K562 (cell line): ENCODE measurements at regions of chr7 and their contacts with region 1.

Region 1: GRCh38 chr7:106285051-106285854 is 470 bp upstream of the NAMPT start:
- DNase-seq: peak; percentile 98 to 100 (median 98)
- ATAC-seq: peak; percentile 87
- H3K4me3 ChIP-seq: peak overlapping the region; percentile 73
- H3K27ac ChIP-seq: peak overlapping the region; percentile 91
- H3K4me1 ChIP-seq: peaks cover 11 to 28% of the 10 kb centered on the region in 2 experiments
- H3K27me3 ChIP-seq: no peaks in the 10 kb centered on the region
- CTCF ChIP-seq: 0 out of 6 replicates have a peak, but pooled peaks of 1 of the 3 experiments have one; percentile 3
- EP300 ChIP-seq: peak; percentile 20; the same call in 1 of the 2 replicates
- POLR2A ChIP-seq: peak; percentile 94
- RAD21 ChIP-seq: peak in 1 of 2 experiments; percentile 18; a peak in 1 of 4 replicates

Region 2: GRCh38 chr7:106273009-106273668 is 12.1 kb before region 1 on chr7:
- CTCF ChIA-PET with region 1: no interaction called
- POLR2A ChIA-PET with region 1: interaction called, 73 read pairs
- in situ Hi-C with region 1: no loop called
- intact Hi-C with region 1: no loop called
- DNase-seq: no peak
- ATAC-seq: no peak
- H3K4me3 ChIP-seq: no peak overlapping the region
- H3K27ac ChIP-seq: no peak overlapping the region
- H3K4me1 ChIP-seq: no peaks in the 10 kb centered on the region
- H3K27me3 ChIP-seq: no peaks in the 10 kb centered on the region
- CTCF ChIP-seq: no peak
- EP300 ChIP-seq: no peak
- POLR2A ChIP-seq: no peak
- RAD21 ChIP-seq: no peak

Region 3: DNA sequence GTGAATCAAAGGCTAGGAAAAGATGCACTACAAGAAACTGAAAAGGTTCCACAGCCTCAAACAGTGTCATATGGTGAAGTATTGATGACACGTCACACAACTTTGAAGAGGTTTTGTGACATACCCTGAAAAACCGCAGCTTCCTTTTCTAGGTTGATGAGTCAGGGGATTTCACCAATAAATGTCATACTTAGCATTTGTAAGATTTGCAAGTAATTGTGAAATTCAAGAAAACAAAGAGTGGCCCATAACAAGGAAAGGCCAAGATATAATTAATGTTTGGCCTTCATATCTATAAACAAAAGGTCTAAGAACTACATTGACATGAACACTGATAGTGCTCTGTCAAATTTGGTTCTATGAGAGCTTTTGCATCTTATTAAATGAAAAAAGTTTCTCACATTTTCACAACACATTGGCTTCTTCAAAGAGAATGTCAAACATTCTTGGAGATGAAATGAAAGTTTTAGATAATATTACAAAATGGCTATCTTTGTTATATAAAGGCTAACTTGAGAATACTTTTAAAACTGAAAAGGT is 61.5 kb after region 1 on chr7:
- CTCF ChIA-PET with region 1: no interaction called
- POLR2A ChIA-PET with region 1: interaction called, 3 read pairs
- in situ Hi-C with region 1: no loop called
- intact Hi-C with region 1: loop called (anchors 5 kb)
- DNase-seq: peak in 2 of 4 experiments; percentile 60 to 85
- ATAC-seq: peak; percentile 89
- H3K4me3 ChIP-seq: no peak overlapping the region
- H3K27ac ChIP-seq: peak overlapping the region; percentile 64
- H3K4me1 ChIP-seq: peaks cover 0 to 26% of the 10 kb centered on the region in 2 experiments; a peak in 3 of 5 replicates
- H3K27me3 ChIP-seq: no peaks in the 10 kb centered on the region
- CTCF ChIP-seq: no peak
- EP300 ChIP-seq: peak; percentile 94
- POLR2A ChIP-seq: no peak
- RAD21 ChIP-seq: no peak; a peak in 1 of 4 replicates

Region 4: DNA sequence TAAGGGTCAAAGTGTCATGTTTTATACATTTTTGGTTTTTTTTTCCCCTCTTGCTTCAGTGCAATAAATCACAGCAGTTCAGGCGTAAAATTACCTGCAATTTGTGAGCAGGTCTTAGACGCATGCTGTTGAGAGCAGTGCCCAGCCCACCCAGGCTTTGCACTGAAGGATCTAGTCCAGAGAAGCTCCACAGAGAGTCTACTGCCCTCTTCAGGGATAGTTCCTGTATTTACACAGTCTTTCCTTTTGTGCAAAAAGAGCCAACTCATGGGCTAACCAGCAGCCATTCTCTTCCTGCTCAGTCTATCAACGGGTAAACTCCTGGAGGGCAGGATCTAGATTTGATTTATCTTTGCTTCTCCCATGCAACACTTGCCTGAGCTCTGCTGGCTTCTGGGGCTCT is 81.8 kb after region 1 on chr7:
- CTCF ChIA-PET with region 1: no interaction called
- POLR2A ChIA-PET with region 1: interaction called, 3 read pairs
- in situ Hi-C with region 1: no loop called
- intact Hi-C with region 1: loop called (anchors 1 kb)
- DNase-seq: peak in 3 of 4 experiments; percentile 33 to 77 (median 68)
- ATAC-seq: peak; percentile 96
- H3K4me3 ChIP-seq: no peak overlapping the region
- H3K27ac ChIP-seq: no peak overlapping the region
- H3K4me1 ChIP-seq: peaks cover 0 to 18% of the 10 kb centered on the region in 2 experiments; a peak in 4 of 5 replicates
- H3K27me3 ChIP-seq: no peaks in the 10 kb centered on the region
- CTCF ChIP-seq: peak; percentile 69 to 87 (median 74)
- EP300 ChIP-seq: no peak; the same call in 1 of the 2 replicates
- POLR2A ChIP-seq: no peak
- RAD21 ChIP-seq: peak; percentile 85 to 92

Region 5: DNA sequence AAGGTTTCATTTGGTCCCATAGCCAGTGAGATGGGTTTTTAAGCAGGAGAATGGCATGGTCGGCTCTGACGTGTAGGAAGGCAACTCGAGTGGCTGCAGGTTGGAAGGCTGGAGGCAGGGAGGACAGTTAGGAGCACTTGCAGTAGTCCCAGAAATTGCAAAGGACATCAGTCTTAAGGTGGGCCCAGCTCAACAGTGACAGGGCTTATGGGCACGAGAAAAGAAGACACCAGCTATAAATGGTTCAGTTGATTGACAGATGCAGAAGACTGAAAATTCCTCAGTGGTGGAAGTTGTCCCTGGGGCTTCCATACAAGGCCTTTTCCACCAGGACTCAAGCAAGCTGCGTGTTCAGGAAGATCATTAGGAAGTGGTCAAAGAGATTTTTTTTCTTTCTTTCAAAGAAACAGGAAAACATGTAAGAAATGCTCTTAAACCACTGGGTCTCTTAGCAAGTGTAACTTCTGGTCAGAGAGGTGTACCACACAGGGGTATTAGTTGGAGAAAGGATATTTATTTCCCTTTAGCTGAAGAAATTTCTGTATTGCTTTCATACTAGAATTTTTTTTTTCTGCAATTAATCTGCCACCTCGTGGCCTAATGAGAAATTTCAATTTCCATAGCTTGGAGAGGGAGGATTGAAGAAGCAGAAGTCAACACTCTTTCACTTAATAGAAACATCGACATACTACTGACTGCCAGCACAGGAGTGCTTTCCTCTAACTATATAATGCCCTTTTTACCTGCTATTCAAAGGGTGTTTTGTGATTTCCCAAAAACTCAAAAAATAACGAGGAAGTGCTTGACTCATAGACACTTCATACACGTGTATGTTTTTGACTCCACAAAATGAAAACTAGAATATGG is 177.0 kb after region 1 on chr7:
- CTCF ChIA-PET with region 1: no interaction called
- POLR2A ChIA-PET with region 1: interaction called, 10 read pairs
- in situ Hi-C with region 1: no loop called
- intact Hi-C with region 1: loop called (anchors 5 kb)
- DNase-seq: peak; percentile 55 to 71 (median 60)
- ATAC-seq: peak; percentile 81
- H3K4me3 ChIP-seq: no peak overlapping the region
- H3K27ac ChIP-seq: no peak overlapping the region
- H3K4me1 ChIP-seq: peaks cover 0 to 15% of the 10 kb centered on the region in 2 experiments; a peak in 3 of 5 replicates
- H3K27me3 ChIP-seq: no peaks in the 10 kb centered on the region
- CTCF ChIP-seq: peak; percentile 58 to 86 (median 62); a peak in 5 of 6 replicates
- EP300 ChIP-seq: no peak; the same call in 1 of the 2 replicates
- POLR2A ChIP-seq: no peak
- RAD21 ChIP-seq: peak; percentile 95 to 98

Region 6: GRCh38 chr7:106535234-106536026 is 250.2 kb after region 1 on chr7:
- CTCF ChIA-PET with region 1: no interaction called
- POLR2A ChIA-PET with region 1: interaction called, 4 read pairs
- in situ Hi-C with region 1: no loop called
- intact Hi-C with region 1: loop called (anchors 10 kb)
- DNase-seq: no peak
- ATAC-seq: peak; percentile 20
- H3K4me3 ChIP-seq: no peak overlapping the region
- H3K27ac ChIP-seq: no peak overlapping the region
- H3K4me1 ChIP-seq: peaks cover 0 to 22% of the 10 kb centered on the region in 2 experiments; a peak in 4 of 5 replicates
- H3K27me3 ChIP-seq: no peaks in the 10 kb centered on the region
- CTCF ChIP-seq: no peak
- EP300 ChIP-seq: no peak
- POLR2A ChIP-seq: no peak
- RAD21 ChIP-seq: no peak